ENCODE measurements at regions of chr1 and their contacts with region 1.

Region 1: DNA sequence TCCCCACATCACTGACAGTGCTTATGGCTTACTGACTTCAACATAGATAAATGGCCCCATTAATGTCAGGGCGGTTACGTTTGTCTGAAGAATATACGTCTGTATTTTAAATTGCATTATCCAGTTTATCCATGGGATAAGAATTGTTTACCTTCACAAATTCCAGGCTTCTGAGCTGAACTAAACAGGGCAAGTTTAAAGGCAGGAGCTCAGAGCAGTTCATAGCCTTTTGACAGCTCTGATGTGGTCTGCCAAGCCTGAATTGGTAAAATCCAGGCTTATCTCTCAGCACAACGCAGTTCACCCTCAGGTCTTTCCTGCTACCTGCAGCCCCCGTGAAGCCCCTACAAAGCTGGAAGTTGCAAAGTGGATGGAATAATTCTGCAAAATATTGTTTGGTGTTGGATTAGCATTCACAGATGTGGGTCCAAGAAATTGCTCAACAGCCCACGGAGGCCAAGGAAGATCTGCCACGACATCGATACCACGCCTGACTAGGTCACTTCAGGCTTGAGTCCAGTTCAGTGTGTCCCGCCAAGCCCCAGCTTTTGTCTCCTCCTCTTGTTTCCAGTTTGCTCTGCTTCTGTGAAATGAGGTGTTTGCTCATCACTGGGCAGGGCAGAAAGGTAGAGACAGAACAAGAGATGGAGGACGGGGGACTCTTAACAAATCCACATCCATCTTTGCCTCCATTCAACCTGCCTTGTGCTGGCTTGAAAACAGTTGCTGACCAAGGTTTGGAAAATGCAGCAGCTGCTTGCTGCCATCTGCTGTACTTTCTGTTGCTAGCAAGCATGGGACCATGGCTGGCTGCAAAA is 79.8 kb upstream of the GREM2 start:
- DNase-seq: peak; percentile 78
- ATAC-seq: peak; percentile 90
- H3K4me3 ChIP-seq: no peak overlapping the region
- H3K27ac ChIP-seq: peak overlapping the region; percentile 13
- H3K4me1 ChIP-seq: peaks cover 8% of the 10 kb centered on the region
- H3K27me3 ChIP-seq: no peaks in the 10 kb centered on the region; the same call in 1 of the 2 replicates
- CTCF ChIP-seq: peak; percentile 92
- POLR2A ChIP-seq: no peak
- RAD21 ChIP-seq: peak; percentile 98

Region 2: GRCh38 chr1:240199758-240200645 is 491.7 kb before region 1 on chr1:
- CTCF ChIA-PET with region 1: no interaction called
- POLR2A ChIA-PET with region 1: interaction called, 12 read pairs
- dilution Hi-C with region 1: no loop called
- in situ Hi-C with region 1: no loop called
- intact Hi-C with region 1: no loop called
- DNase-seq: no peak
- ATAC-seq: peak; percentile 29
- H3K4me3 ChIP-seq: no peak overlapping the region
- H3K27ac ChIP-seq: peak overlapping the region; percentile 35; the same call in 1 of the 2 replicates
- H3K4me1 ChIP-seq: peaks cover 2% of the 10 kb centered on the region; the same call in 1 of the 2 replicates
- H3K27me3 ChIP-seq: no peaks in the 10 kb centered on the region
- CTCF ChIP-seq: no peak
- POLR2A ChIP-seq: no peak
- RAD21 ChIP-seq: no peak

Region 3: GRCh38 chr1:240455228-240455821 is 236.4 kb before region 1 on chr1:
- CTCF ChIA-PET with region 1: interaction called, 4 read pairs
- POLR2A ChIA-PET with region 1: no interaction called
- dilution Hi-C with region 1: no loop called
- in situ Hi-C with region 1: loop called (anchors 25 kb)
- intact Hi-C with region 1: loop called (anchors 1 kb)
- DNase-seq: peak; percentile 22
- ATAC-seq: peak; percentile 54; the same call in 1 of the 2 replicates
- H3K4me3 ChIP-seq: no peak overlapping the region
- H3K27ac ChIP-seq: no peak overlapping the region
- H3K4me1 ChIP-seq: peaks cover 4% of the 10 kb centered on the region; the same call in 1 of the 2 replicates
- H3K27me3 ChIP-seq: no peaks in the 10 kb centered on the region
- CTCF ChIP-seq: peak; percentile 62
- POLR2A ChIP-seq: no peak
- RAD21 ChIP-seq: peak; percentile 58

Region 4: DNA sequence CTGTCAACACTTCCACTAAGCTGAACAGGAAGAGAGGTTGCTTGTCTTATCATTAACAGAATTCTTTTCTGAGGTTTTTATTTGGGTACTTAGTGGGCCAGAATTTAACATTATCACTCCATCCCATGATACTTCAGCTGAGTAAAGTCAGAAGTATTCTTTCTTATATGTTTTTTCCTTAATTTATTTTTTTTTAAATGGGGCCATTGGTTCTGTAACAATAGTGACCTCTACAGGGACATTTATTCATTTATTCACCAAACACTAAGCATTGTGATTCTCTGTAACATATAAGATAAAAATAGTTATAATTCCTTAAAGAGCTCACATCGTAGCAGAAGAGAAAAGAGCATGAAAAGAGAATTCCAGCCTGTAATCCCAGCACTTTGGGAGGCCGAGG is 89.5 kb before region 1 on chr1:
- CTCF ChIA-PET with region 1: interaction called, 5 read pairs
- POLR2A ChIA-PET with region 1: no interaction called
- dilution Hi-C with region 1: no loop called
- in situ Hi-C with region 1: no loop called
- intact Hi-C with region 1: loop called (anchors 2 kb)
- DNase-seq: peak; percentile 35
- ATAC-seq: peak; percentile 77
- H3K4me3 ChIP-seq: no peak overlapping the region
- H3K27ac ChIP-seq: no peak overlapping the region
- H3K4me1 ChIP-seq: peaks cover 4% of the 10 kb centered on the region; the same call in 1 of the 2 replicates
- H3K27me3 ChIP-seq: no peaks in the 10 kb centered on the region
- CTCF ChIP-seq: peak; percentile 53
- POLR2A ChIP-seq: no peak
- RAD21 ChIP-seq: peak; percentile 48

Region 5: GRCh38 chr1:240611619-240612480 is 79.9 kb before region 1 on chr1 and contains the start of gene GREM2:
- CTCF ChIA-PET with region 1: interaction called, 6 read pairs
- POLR2A ChIA-PET with region 1: no interaction called
- dilution Hi-C with region 1: no loop called
- in situ Hi-C with region 1: loop called (anchors 5 kb)
- intact Hi-C with region 1: loop called (anchors 2 kb)
- DNase-seq: peak; percentile 95
- ATAC-seq: peak; percentile 96
- H3K4me3 ChIP-seq: peak within 1 kb of the TSS; percentile 97
- H3K27ac ChIP-seq: peak within 1 kb of the TSS; percentile 23
- H3K4me1 ChIP-seq: peaks cover 9% of the 10 kb centered on the region
- H3K27me3 ChIP-seq: no peaks in the 10 kb centered on the region
- CTCF ChIP-seq: no peak
- POLR2A ChIP-seq: peak; percentile 60; the same call in 1 of the 2 replicates
- RAD21 ChIP-seq: no peak
- total RNA-seq, gene GREM2: 3.0 and 5.0 TPM in 2 replicates